ENCODE measurements at regions of chr16 and their contacts with region 1.

Region 1: GRCh38 chr16:68237243-68238028 is 1.5 kb upstream of the ESRP2 start:
- DNase-seq: peak; percentile 98 to 99 (median 99)
- ATAC-seq: peak; percentile 70 to 82 (median 72)
- H3K4me3 ChIP-seq: peak overlapping the region; percentile 70 to 94 (median 91)
- H3K27ac ChIP-seq: peak overlapping the region; percentile 72 to 88 (median 72)
- H3K4me1 ChIP-seq: peaks cover 0 to 22% (median 3%) of the 10 kb centered on the region in 4 donors
- H3K27me3 ChIP-seq: no peaks in the 10 kb centered on the region
- CTCF ChIP-seq: peak in 1 of 4 donors; percentile 6
- POLR2A ChIP-seq: peak; percentile 97

Region 2: DNA sequence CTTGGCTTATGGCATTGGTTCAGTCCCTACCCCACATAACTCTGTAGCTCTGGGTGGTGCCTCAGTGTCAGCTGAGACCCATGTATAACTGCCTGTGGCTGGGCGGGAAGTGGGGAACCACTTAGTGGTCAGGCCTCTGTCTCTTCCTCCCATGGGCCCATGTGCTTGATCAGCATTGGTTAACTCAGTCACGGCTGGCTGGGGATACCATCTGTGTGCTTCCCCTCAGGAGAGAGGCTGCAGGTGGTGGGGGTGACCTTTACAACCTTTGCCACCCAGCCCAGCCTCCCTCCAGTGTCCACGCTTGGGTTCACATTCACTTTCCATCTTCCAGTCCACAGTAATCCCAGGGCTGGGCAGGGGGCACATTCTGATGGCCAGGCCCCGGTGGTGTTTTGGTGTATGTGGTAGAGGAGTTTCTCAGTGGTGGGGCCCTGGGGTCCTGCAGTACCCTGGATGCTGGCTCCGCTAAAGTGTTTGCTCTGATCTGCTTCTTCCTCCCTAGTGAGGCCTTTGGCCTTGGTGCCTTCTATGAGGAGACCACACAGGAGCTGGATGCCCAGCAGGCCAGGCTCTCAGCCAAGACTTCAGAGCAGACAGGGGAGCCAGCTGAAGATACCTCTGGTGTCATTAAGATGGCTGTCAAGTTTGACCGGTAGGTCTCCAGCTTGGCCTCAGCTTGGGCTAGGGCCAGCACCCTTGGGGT is 162.4 kb before region 1 on chr16:
- intact Hi-C with region 1: loop called (anchors 10 kb)
- DNase-seq: peak in 2 of 3 donors; percentile 33 to 47
- ATAC-seq: no peak
- H3K4me3 ChIP-seq: no peak overlapping the region
- H3K27ac ChIP-seq: peak overlapping the region in 1 of 3 donors; percentile 77
- H3K4me1 ChIP-seq: peaks cover 0 to 72% (median 30%) of the 10 kb centered on the region in 4 donors
- H3K27me3 ChIP-seq: no peaks in the 10 kb centered on the region
- CTCF ChIP-seq: no peak
- POLR2A ChIP-seq: no peak

Region 3: DNA sequence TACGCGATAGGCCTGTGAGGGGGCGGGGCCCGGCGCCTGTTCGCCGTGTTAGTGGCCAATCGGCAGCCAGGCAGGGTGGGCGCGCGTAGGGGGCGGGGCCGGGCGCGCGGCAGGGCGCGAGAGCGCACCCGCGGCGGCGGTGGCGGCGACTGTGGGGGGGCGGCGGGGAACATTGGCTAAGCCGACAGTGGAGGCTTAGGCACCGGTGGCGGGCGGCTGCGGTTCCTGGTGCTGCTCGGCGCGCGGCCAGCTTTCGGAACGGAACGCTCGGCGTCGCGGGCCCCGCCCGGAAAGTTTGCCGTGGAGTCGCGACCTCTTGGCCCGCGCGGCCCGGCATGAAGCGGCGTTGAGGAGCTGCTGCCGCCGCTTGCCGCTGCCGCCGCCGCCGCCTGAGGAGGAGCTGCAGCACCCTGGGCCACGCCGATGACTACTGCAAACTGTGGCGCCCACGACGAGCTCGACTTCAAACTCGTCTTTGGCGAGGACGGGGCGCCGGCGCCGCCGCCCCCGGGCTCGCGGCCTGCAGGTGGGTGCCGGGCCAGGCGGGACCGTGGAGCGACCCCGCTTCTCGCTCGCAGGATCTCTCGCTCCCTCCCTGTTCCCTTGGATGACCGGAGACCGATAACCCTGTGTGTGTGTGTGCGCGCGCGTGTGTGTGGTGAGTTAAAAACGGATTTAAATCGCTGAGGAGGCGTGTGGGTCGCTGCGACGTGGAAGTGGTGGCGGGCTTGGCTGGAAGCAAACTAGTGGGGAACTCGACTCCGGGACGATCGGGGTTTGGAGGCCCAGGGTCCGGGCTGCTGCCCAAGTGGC is 152.0 kb before region 1 on chr16 and contains the start of gene NFATC3:
- intact Hi-C with region 1: loop called in 1 of 2 experiments (anchors 10 kb)
- DNase-seq: peak; percentile 99
- ATAC-seq: peak; percentile 76 to 86 (median 84)
- H3K4me3 ChIP-seq: peak within 1 kb of the TSS; percentile 82 to 83 (median 82)
- H3K27ac ChIP-seq: peak within 1 kb of the TSS; percentile 96 to 99 (median 96)
- H3K4me1 ChIP-seq: peaks cover 0 to 51% (median 24%) of the 10 kb centered on the region in 4 donors
- H3K27me3 ChIP-seq: no peaks in the 10 kb centered on the region
- CTCF ChIP-seq: no peak
- POLR2A ChIP-seq: peak; percentile 88
- total RNA-seq, gene NFATC3: 19.9 to 30.1 (median 25.1) TPM

Region 4: GRCh38 chr16:68096491-68096890 is 140.9 kb before region 1 on chr16:
- intact Hi-C with region 1: no loop called
- DNase-seq: no peak
- ATAC-seq: peak in 3 of 4 donors; percentile 9 to 56 (median 32)
- H3K4me3 ChIP-seq: no peak overlapping the region
- H3K27ac ChIP-seq: no peak overlapping the region
- H3K4me1 ChIP-seq: peaks cover 0 to 44% (median 9%) of the 10 kb centered on the region in 4 donors
- H3K27me3 ChIP-seq: no peaks in the 10 kb centered on the region
- CTCF ChIP-seq: no peak
- POLR2A ChIP-seq: no peak

Region 5: GRCh38 chr16:68445458-68445857 is 208.0 kb after region 1 on chr16:
- intact Hi-C with region 1: no loop called
- DNase-seq: peak in 2 of 3 donors; percentile 33 to 71
- ATAC-seq: peak; percentile 19 to 49 (median 44)
- H3K4me3 ChIP-seq: no peak overlapping the region
- H3K27ac ChIP-seq: no peak overlapping the region
- H3K4me1 ChIP-seq: peaks cover 0 to 11% (median 5%) of the 10 kb centered on the region in 4 donors
- H3K27me3 ChIP-seq: no peaks in the 10 kb centered on the region
- CTCF ChIP-seq: peak; percentile 45 to 70 (median 52)
- POLR2A ChIP-seq: no peak

Measured in right lobe of liver (tissue), 6 donors.